OCI-LY7 (cell line): ENCODE measurements at regions of chr5 and their contacts with region 1.

Region 1: GRCh38 chr5:6251565-6252102 is 126.7 kb downstream of the MED10 start:
- DNase-seq: no peak
- H3K4me3 ChIP-seq: no peak overlapping the region
- H3K27ac ChIP-seq: no peak overlapping the region
- H3K4me1 ChIP-seq: peaks cover 5% of the 10 kb centered on the region
- CTCF ChIP-seq: no peak

Region 2: DNA sequence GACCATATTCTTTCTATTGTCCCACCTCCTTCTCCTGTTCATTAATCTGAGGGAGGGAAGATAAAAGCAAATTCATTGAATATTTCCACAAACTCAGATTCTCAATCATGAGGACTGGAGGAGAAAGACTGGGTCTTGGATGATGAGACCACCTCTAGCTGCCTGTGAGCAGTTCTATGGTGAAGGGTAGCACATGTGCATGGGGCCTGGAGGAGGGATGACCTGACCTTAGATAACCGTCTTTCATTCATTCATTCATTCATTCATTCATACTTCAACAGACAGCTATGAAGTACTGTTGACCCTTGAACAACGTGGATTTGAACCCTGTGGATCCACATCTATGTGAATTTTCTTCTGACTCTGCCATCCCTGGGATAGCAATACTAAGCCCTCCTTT is 58.3 kb after region 1 on chr5:
- CTCF ChIA-PET with region 1: no interaction called
- POLR2A ChIA-PET with region 1: no interaction called
- intact Hi-C with region 1: loop called (anchors 2 kb)
- DNase-seq: no peak
- H3K4me3 ChIP-seq: no peak overlapping the region
- H3K27ac ChIP-seq: no peak overlapping the region
- H3K4me1 ChIP-seq: no peaks in the 10 kb centered on the region
- CTCF ChIP-seq: no peak